Left colon (tissue), 2 donors: ENCODE measurements at regions of chr15 and their contacts with region 1.

Region 1: DNA sequence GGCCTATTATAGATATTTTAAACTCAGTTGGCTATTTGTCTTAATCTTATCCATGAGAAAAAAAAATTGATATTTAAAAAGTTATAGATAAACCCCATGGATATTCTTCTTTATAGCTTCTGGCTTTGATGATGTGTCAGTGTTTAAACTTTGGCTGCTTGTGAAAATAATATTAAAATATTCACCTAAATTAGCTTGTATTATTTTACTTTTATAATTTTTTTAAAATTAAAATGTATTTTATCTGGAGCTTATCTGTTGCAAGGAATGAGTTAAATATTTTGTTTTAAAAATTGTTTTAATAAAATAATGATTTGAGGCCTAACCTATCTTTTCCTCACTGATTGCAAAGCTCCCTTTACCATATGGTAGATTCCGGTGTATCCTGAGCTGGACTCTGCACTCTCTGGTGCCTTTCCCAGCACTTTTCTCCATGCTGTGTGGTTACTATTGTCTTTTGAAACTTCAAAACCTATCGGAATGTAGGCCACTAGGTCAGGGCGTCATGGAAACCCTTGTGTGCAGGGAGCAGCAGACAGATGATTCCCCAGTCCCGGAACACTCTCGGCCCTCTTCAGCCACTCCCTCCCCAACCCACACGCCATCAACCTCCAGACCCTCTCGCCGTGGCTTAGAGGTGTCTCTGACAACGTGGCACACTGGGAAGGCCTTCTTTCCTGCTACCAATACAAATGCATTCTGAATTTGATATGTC is 252.3 kb upstream of the ATP10A start:
- DNase-seq: no peak
- ATAC-seq: no peak

Region 2: GRCh38 chr15:25954398-25954797 is 161.0 kb before region 1 on chr15:
- intact Hi-C with region 1: no loop called
- DNase-seq: no peak
- ATAC-seq: no peak

Region 3: DNA sequence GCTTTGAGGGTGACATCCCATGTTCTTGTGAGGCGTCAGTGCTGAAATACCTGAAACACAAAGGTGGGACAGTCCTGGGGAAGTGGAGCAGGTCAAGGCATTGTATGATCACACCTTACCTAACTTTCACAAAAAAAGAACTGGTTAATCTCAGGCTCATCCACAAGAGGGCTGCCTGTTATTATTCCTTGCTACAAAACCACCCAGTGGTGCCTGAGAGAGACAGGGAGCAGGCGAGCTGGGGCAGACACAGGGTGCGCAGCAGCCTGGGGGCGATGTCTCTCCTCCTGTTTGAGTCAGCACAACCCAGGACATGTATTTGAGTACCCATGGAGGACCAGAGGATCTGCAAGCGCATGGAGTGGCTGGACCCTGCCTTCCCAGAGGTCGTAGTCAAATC is 64.5 kb after region 1 on chr15:
- intact Hi-C with region 1: loop called in 1 of 2 experiments (anchors 10 kb)
- DNase-seq: no peak
- ATAC-seq: no peak